ENCODE measurements at regions of chr18 and their contacts with region 1.

Region 1: DNA sequence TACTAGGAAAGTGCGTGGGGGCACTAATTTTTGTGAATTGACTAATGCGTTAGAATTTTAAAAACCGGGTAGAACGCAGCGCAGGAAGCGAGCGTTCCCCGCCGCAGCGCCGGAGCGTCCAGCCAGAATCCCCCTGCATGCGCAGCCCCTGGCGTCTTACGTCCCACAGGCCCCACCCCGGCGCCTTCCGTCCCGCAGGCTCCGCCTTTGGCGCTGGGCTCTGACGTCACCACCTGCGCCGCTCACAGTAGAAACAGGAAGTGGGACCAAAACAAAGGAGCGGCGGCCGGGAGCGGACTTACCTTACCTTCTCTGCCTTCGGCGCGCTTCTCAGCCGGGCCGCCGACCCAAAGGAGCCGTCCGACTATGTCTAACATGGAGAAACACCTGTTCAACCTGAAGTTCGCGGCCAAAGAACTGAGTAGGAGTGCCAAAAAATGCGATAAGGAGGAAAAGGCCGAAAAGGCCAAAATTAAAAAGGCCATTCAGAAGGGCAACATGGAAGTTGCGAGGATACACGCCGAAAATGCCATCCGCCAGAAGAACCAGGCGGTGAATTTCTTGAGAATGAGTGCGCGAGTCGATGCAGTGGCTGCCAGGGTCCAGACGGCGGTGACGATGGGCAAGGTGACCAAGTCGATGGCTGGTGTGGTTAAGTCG is at the start of gene CHMP1B:
- DNase-seq: peak; percentile 99
- ATAC-seq: peak; percentile 99
- total RNA-seq, gene CHMP1B: 25.6 to 35.3 TPM

Region 2: GRCh38 chr18:11669271-11669947 is 181.9 kb before region 1 on chr18:
- intact Hi-C with region 1: no loop called
- DNase-seq: no peak
- ATAC-seq: no peak

Region 3: GRCh38 chr18:11908182-11909060 is 57.1 kb after region 1 on chr18 and contains the start of gene MPPE1:
- intact Hi-C with region 1: loop called in 1 of 2 experiments (anchors 5 kb)
- DNase-seq: peak; percentile 93
- ATAC-seq: peak; percentile 95 to 97
- total RNA-seq, gene MPPE1: 26.5 to 30.0 TPM

Measured in left cardiac atrium (tissue), 4 donors.